Aorta (tissue), 5 donors: ENCODE measurements at regions of chr15 and their contacts with region 1.

Region 1: DNA sequence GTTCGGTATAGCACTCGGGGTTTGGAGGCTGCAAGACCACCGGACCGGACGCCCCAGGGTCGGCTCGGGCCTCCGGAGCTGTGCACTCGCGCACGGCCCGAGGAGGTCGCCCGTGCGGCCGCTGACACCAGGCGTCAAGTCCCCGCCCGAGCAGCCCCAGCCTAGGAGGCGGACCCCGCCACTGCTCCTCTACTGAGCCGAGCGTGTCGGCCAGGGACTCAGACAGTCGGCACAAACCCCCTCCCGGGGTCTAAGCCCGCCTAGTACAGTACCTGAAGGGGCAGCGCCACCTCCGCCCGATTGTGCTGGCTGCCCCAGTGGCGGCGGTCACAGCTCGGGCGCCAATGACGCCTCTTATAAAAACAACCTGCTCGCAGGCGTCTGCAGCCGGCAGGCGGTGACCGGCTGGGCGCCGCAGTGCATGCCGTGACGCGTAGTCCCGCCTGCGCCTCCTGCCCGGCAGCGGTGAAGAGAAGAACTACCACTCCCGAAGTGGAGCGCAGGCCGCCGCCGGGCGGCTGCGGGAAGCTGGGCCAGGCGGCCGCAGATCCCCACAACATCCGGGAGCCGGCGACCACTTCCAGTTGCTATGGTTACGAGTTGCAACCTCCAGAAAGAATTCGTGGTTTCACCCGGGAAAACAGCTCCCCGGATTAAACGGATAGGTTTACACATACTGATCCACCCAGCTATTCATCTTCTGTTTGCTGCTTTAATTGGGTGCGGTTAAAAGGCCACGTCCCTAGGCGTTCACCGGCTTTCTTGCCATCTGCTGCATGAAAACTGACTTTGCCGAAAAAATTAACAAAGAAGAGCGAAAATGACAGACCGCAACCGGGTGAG is at the starts of genes CCPG1 and PIERCE2:
- DNase-seq: peak; percentile 96
- ATAC-seq: peak; percentile 100
- H3K4me3 ChIP-seq: peak within 1 kb of the TSS; percentile 65 to 70
- H3K27ac ChIP-seq: peak within 1 kb of the TSS in 1 of 2 donors; percentile 56
- H3K4me1 ChIP-seq: peaks cover 0 to 3% of the 10 kb centered on the region in 2 donors
- H3K27me3 ChIP-seq: no peaks in the 10 kb centered on the region
- total RNA-seq, gene CCPG1: 108 to 126 TPM
- total RNA-seq, gene PIERCE2: 0.75 to 2.7 TPM

Region 2: GRCh38 chr15:55221090-55222011 is 186.8 kb before region 1 on chr15:
- intact Hi-C with region 1: loop called in 1 of 2 experiments (anchors 10 kb)
- DNase-seq: no peak
- ATAC-seq: peak; percentile 78
- H3K4me3 ChIP-seq: no peak overlapping the region
- H3K27ac ChIP-seq: peak overlapping the region; percentile 61 to 78
- H3K4me1 ChIP-seq: no peaks in the 10 kb centered on the region
- H3K27me3 ChIP-seq: no peaks in the 10 kb centered on the region

Region 3: DNA sequence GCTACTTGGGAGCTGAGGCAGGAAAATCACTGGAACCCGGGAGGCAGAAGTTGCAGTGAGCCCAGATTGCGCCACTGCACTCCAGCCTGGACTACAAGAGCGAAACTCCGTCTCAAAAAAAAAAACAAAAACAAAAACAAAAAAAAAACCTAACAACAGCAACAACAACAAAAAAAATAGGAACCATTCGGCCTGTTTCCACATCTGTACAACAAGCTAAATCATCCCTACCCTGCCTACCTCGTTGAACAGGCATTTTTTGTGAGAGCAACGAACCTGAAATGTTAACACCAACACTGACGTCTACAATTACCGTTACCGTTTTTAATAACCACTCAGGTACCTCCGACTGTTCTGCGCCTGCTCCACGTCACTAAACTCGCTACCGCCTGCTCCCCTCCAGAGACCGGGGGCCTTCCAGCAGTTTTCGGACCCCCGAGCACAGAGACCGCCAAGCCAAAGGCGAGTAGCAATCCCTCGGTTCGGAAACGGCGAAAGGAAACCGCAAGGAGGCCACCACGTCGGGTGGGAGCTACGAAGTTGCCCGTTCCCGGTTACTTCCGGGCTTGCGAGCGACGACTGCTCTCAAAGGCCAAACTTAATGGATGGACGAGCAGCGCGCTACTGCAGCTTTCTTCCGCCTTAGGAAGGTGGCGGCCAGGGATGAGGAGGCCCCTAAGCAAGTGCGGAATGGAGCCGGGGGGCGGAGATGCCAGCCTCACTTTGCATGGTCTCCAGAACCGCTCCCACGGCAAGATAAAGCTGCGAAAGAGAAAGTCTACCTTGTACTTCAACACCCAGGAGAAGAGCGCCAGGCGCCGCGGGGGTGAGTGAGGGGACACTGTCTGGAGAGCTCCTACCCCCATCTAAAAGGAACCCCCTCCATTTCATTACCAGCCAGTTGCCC is 89.3 kb before region 1 on chr15 and contains the starts of genes PIGB and PIGBOS1:
- intact Hi-C with region 1: loop called in 1 of 2 experiments (anchors 1 kb)
- DNase-seq: peak; percentile 93
- ATAC-seq: peak; percentile 98
- H3K4me3 ChIP-seq: peak within 1 kb of the TSS; percentile 75 to 89
- H3K27ac ChIP-seq: peak within 1 kb of the TSS in 1 of 2 donors; percentile 74
- H3K4me1 ChIP-seq: peaks cover 2 to 3% of the 10 kb centered on the region in 2 donors
- H3K27me3 ChIP-seq: no peaks in the 10 kb centered on the region
- total RNA-seq, gene PIGB: 14.4 to 18.3 TPM
- total RNA-seq, gene PIGBOS1: 12.5 to 14.5 TPM

Region 4: DNA sequence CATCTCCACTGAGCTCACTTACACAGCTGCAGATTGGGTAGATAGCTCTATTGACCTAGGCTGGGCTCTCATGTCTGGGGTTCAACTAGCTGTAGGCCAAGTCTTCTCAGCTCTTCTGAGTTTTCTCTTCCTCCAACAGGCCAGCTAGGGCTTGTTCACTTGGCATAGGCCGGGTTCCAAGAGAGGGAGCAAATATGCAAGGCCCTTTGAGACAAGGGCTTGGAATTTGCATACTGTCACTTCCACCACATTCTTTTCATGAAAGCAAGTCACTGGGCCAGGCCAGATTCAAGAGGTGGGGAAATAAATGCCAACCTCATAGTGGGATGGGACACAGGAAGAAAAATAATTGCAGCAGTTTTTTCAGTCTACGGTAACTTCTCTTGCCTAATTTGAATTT is 64.0 kb before region 1 on chr15:
- intact Hi-C with region 1: loop called in 1 of 2 experiments (anchors 10 kb)
- DNase-seq: no peak
- ATAC-seq: no peak
- H3K4me3 ChIP-seq: no peak overlapping the region
- H3K27ac ChIP-seq: peak overlapping the region; percentile 68 to 97
- H3K4me1 ChIP-seq: peaks cover 0 to 10% of the 10 kb centered on the region in 2 donors
- H3K27me3 ChIP-seq: no peaks in the 10 kb centered on the region

Region 5: DNA sequence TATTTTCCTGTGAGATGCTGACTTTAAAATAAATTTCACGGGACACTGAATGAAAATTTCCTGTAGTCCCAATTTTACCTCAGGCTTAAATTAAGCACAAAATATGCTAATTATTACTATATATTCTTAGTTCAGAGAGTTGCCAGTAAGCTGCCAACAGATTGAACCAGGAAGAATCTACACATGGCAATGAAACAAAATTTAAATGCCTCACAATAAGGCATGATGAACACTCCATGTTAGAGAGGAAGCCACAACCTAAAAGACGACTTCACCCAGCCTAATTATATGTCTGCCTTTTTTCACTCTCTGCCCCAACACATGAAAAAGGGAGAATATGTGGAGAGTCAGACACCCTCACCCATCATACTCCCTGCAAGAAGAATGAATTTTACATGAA is 60.2 kb after region 1 on chr15:
- intact Hi-C with region 1: no loop called
- DNase-seq: no peak
- ATAC-seq: no peak
- H3K4me3 ChIP-seq: no peak overlapping the region
- H3K27ac ChIP-seq: no peak overlapping the region
- H3K4me1 ChIP-seq: no peaks in the 10 kb centered on the region
- H3K27me3 ChIP-seq: no peaks in the 10 kb centered on the region